ENCODE measurements at regions of chr3 and their contacts with region 1.

Region 1: GRCh38 chr3:136752422-136753325 is 496 bp upstream of the STAG1 start:
- DNase-seq: peak; percentile 99
- ATAC-seq: peak; percentile 87 to 95 (median 90)
- H3K4me3 ChIP-seq: peak overlapping the region; percentile 71 to 79 (median 73)
- H3K27ac ChIP-seq: peak overlapping the region; percentile 99 to 100 (median 99)
- H3K4me1 ChIP-seq: peaks cover 0 to 15% (median 4%) of the 10 kb centered on the region in 4 donors
- H3K27me3 ChIP-seq: no peaks in the 10 kb centered on the region
- CTCF ChIP-seq: peak in 1 of 4 donors; percentile 20
- POLR2A ChIP-seq: peak; percentile 94

Region 2: DNA sequence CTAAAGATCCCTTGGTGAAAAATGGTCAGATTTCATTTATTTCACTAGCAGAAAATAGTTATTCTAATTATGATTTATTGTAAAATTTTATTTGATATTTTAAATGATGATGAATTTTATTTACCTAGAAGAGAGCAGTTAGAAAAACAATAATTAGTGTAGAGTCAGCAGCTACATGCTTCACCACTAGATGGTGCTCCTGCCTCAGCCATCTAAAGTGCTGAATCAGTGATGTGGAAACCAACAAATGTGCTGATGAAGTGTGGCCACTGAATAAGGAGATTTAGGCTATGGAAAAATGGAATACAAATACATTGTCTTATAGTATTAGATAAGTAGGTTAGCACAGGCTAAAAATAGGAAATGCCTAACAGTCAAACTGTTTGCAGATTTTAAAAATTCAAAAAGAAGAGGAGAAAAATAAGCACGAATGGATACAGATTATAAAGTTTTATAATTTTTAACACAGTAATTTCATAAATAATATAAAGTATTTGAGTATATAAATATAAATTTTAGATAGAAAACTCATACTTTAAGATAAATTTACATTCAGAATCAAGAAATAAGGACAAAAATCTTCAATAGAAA is 677.4 kb before region 1 on chr3:
- intact Hi-C with region 1: loop called in 1 of 2 experiments (anchors 10 kb)
- DNase-seq: peak in 2 of 3 donors; percentile 33 to 69
- ATAC-seq: peak; percentile 95 to 98 (median 97)
- H3K4me3 ChIP-seq: no peak overlapping the region
- H3K27ac ChIP-seq: no peak overlapping the region
- H3K4me1 ChIP-seq: peaks cover 0 to 7% (median 0%) of the 10 kb centered on the region in 4 donors
- H3K27me3 ChIP-seq: no peaks in the 10 kb centered on the region
- CTCF ChIP-seq: peak; percentile 90 to 98 (median 95)
- POLR2A ChIP-seq: no peak

Region 3: GRCh38 chr3:136882572-136882971 is 129.9 kb after region 1 on chr3:
- intact Hi-C with region 1: no loop called
- DNase-seq: no peak
- ATAC-seq: peak in 2 of 4 donors; percentile 26 to 46
- H3K4me3 ChIP-seq: no peak overlapping the region
- H3K27ac ChIP-seq: no peak overlapping the region
- H3K4me1 ChIP-seq: no peaks in the 10 kb centered on the region
- H3K27me3 ChIP-seq: no peaks in the 10 kb centered on the region
- CTCF ChIP-seq: no peak
- POLR2A ChIP-seq: no peak

Region 4: GRCh38 chr3:137013955-137014688 is 261.4 kb after region 1 on chr3:
- intact Hi-C with region 1: loop called (anchors 5 kb)
- DNase-seq: peak; percentile 88 to 92 (median 92)
- ATAC-seq: peak; percentile 92 to 96 (median 96)
- H3K4me3 ChIP-seq: peak overlapping the region; percentile 26 to 51 (median 50)
- H3K27ac ChIP-seq: peak overlapping the region; percentile 83 to 93 (median 90)
- H3K4me1 ChIP-seq: peaks cover 0 to 15% (median 0%) of the 10 kb centered on the region in 4 donors
- H3K27me3 ChIP-seq: no peaks in the 10 kb centered on the region
- CTCF ChIP-seq: peak; percentile 89 to 96 (median 92)
- POLR2A ChIP-seq: peak; percentile 54

Measured in right lobe of liver (tissue), 6 donors.